ENCODE measurements at regions of chr6 and their contacts with region 1.

Region 1: GRCh38 chr6:112076200-112076599 is 11.1 kb downstream of the TUBE1 start:
- DNase-seq: no peak
- ATAC-seq: no peak
- H3K4me3 ChIP-seq: no peak overlapping the region
- H3K27ac ChIP-seq: no peak overlapping the region
- H3K4me1 ChIP-seq: peaks cover 0 to 2% (median 0%) of the 10 kb centered on the region in 9 donors
- H3K27me3 ChIP-seq: no peaks in the 10 kb centered on the region
- CTCF ChIP-seq: no peak

Region 2: DNA sequence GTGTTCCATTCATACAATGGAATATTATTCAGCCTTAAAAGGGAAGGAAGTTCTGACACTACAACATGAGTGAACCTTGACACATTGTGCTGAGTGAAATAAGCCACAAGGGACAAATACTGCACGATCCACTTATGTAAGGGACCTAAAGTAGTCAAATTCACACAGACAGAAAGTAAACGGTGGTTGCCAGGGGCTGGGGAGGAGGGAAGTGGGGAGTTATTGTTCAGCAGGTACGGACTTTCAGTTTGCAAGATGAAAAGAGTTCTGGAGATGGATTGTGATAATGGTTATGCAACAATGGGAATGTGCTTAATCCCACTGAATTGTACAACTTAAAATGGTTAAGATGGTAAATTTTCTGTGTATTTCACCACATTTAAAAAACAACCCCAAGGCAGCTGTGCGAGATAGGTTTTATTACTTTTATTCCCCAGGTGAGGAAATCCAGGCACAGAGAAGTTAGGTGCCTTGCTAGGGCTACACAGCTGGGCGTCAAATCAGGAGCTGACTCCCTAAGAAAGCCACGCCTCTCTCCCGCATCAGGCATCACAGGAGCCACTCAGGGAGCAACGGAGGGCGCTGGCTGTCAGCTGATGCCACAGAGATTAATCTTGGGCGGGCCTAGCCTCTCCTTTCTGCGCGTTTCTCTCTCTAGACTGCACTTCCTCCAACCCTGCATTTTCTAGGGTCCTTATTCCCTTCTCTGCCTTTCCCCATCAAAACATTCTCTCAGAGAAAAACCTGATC is 461.2 kb before region 1 on chr6:
- intact Hi-C with region 1: no loop called
- DNase-seq: no peak
- ATAC-seq: peak in 5 of 8 donors; percentile 40 to 67 (median 43)
- H3K4me3 ChIP-seq: no peak overlapping the region
- H3K27ac ChIP-seq: no peak overlapping the region
- H3K4me1 ChIP-seq: peaks cover 0 to 17% (median under 1%) of the 10 kb centered on the region in 9 donors
- H3K27me3 ChIP-seq: no peaks in the 10 kb centered on the region
- CTCF ChIP-seq: no peak

Region 3: GRCh38 chr6:112139052-112139451 is 62.9 kb after region 1 on chr6:
- intact Hi-C with region 1: loop called in 2 of 10 experiments (anchors 5 to 10 kb)
- DNase-seq: no peak
- ATAC-seq: peak in 4 of 8 donors; percentile 48 to 62 (median 58)
- H3K4me3 ChIP-seq: no peak overlapping the region
- H3K27ac ChIP-seq: peak overlapping the region in 2 of 10 donors; percentile 1 to 36
- H3K4me1 ChIP-seq: peaks cover 0 to 7% (median 4%) of the 10 kb centered on the region in 9 donors
- H3K27me3 ChIP-seq: no peaks in the 10 kb centered on the region
- CTCF ChIP-seq: no peak

Region 4: DNA sequence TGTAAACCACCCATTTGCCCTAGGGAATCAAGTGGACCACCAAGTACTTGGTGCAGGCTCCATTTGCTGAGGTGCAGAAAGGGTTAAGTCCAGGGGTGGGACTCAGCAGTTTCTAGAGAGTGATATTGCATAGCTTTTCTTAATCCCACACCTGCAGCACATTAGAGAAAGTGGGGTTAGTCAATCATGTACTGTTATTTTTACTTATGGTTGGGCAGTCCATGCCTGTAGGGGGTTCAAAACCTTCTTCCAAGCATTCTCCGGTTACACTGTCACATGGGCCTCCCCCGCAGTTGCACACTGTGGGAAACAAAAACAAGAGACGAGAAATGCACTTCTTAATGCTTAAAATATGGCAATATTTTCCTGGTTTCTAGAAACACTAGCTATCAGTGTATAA is 112.7 kb after region 1 on chr6:
- intact Hi-C with region 1: no loop called
- DNase-seq: no peak
- ATAC-seq: no peak
- H3K4me3 ChIP-seq: no peak overlapping the region
- H3K27ac ChIP-seq: peak overlapping the region in 3 of 10 donors; percentile 1 to 39 (median 22)
- H3K4me1 ChIP-seq: peaks cover 5 to 34% (median 15%) of the 10 kb centered on the region in 9 donors
- H3K27me3 ChIP-seq: no peaks in the 10 kb centered on the region
- CTCF ChIP-seq: no peak